ENCODE measurements at regions of chr1 and their contacts with region 1.

Region 1: DNA sequence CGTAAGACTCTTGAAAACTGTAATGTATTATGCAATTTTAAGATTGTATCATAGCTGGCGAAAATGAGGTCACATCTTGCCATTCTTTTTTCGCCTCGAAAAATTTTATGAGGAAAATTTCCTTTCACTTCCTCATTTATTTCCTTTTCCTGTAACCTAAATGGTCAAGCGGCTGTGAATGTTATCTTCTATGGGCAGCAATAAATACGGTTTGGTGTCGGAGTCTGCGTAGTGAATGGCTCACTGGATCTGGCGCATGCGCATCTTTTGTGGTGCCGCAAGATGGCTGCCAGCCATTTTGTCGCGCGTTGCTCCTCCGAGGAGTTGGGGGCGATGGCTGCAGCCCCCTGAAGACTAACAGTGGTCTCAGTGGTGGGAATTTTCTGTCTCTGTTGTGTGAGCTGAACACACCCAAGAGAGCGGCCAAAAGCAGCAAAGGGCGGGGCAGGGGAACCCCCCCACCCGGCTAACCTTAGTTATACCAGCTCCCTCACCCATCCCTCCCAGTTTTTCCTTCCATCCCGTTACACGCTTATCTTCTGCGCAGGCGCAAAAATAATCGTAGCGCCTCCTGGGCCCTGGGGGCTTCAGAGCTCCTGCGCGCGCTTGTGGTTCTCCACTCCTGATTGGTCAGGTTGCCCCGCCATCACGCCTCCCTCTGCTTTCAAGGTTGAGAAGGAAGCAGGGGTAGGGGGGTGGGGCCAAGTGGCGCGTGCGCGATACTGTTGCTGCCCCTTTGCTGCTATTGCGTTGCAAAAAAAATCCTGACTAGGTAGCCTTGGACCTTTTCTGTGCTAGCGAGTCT is at the start of gene RPRD2:
- DNase-seq: peak; percentile 100
- H3K4me3 Mint-ChIP-seq: peak within 1 kb of the TSS; percentile 92
- H3K27ac Mint-ChIP-seq: peak within 1 kb of the TSS; percentile 97
- H3K4me1 Mint-ChIP-seq: peaks cover 19% of the 10 kb centered on the region
- H3K27me3 Mint-ChIP-seq: no peaks in the 10 kb centered on the region
- CTCF ChIP-seq: no peak
- total RNA-seq, gene RPRD2: 35.2 and 37.4 TPM in 2 replicates

Region 2: DNA sequence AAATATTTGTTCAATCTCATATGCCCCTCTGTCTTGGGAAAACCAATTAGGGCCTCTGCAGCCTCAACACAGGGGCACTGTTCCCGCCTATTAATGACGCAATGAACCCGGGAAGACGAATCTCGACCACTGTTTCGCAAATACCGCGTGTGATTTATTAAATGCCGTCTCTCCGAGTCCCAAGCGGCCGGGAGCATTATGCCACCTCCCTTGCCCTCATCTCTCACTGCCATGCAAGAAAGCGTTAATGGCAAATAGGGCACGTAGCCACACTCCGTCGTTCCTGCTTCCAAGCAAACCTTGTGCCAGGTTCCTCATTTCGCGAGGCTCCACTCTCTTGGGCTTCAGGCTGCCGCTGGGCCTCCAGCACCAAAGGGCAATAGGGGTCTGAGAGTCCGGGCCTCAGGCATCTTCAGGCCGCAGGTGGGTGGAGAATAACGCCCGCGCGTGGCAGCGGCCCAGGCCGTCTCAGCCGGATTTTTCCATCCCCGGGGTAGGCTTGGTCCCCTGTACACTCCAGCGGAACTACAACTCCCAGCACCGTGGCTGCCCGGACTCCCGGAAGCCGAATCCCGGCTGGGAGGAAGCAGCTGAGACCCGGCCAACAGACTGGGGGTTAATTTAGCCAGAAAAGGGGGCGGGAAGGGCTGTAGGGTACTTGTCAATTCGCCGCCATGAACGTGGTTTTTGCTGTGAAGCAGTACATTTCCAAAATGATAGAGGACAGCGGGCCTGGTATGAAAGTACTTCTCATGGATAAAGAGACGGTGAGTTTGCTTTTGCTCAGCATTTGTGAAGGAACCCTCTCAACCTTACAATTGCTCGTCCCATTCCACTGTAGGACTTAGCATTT is 296.2 kb before region 1 on chr1 and contains the start of gene VPS45:
- CTCF ChIA-PET with region 1: no interaction called
- POLR2A ChIA-PET with region 1: interaction called, 11 read pairs
- intact Hi-C with region 1: no loop called
- DNase-seq: peak; percentile 95
- H3K4me3 Mint-ChIP-seq: peak within 1 kb of the TSS; percentile 91
- H3K27ac Mint-ChIP-seq: peak within 1 kb of the TSS; percentile 87
- H3K4me1 Mint-ChIP-seq: peaks cover 33% of the 10 kb centered on the region
- H3K27me3 Mint-ChIP-seq: no peaks in the 10 kb centered on the region
- CTCF ChIP-seq: no peak
- total RNA-seq, gene VPS45: 35.1 and 55.1 TPM in 2 replicates

Region 3: GRCh38 chr1:150268705-150269403 is 94.8 kb before region 1 on chr1 and contains the start of gene APH1A:
- CTCF ChIA-PET with region 1: no interaction called
- POLR2A ChIA-PET with region 1: interaction called, 15 read pairs
- intact Hi-C with region 1: no loop called
- DNase-seq: peak; percentile 99
- H3K4me3 Mint-ChIP-seq: peak within 1 kb of the TSS; percentile 81
- H3K27ac Mint-ChIP-seq: peak within 1 kb of the TSS; percentile 83
- H3K4me1 Mint-ChIP-seq: peaks cover 32% of the 10 kb centered on the region
- H3K27me3 Mint-ChIP-seq: no peaks in the 10 kb centered on the region
- CTCF ChIP-seq: no peak
- total RNA-seq, gene APH1A: 123 and 154 TPM in 2 replicates

Region 4: DNA sequence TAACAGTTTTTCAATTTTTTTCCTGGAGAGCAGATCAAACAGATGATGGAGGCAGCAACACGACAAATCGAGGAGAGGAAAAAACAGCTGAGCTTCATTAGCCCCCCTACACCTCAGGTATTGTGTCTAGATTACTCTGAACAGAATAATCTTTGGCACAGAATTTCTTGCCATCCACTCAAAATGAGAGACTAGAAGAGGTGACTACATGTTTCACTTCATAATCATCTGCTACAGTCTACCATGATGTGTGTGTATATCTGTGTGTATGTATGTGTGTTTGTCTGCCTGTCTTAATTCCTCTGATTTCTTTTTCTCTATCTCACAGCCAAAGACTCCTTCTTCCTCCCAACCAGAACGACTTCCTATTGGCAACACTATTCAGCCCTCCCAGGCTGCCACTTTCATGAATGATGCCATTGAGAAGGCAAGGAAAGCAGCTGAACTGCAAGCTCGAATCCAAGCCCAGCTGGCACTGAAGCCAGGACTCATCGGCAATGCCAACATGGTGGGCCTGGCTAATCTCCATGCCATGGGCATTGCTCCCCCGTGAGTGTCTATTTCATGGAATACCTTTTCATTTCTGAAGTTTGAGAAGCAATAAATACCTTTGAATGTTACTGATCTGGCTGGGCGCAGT is 30.9 kb before region 1 on chr1:
- CTCF ChIA-PET with region 1: interaction called, 5 read pairs
- POLR2A ChIA-PET with region 1: interaction called, 12 read pairs
- intact Hi-C with region 1: no loop called
- DNase-seq: no peak
- H3K4me3 Mint-ChIP-seq: no peak overlapping the region
- H3K27ac Mint-ChIP-seq: no peak overlapping the region
- H3K4me1 Mint-ChIP-seq: no peaks in the 10 kb centered on the region
- H3K27me3 Mint-ChIP-seq: no peaks in the 10 kb centered on the region
- CTCF ChIP-seq: no peak

Region 5: DNA sequence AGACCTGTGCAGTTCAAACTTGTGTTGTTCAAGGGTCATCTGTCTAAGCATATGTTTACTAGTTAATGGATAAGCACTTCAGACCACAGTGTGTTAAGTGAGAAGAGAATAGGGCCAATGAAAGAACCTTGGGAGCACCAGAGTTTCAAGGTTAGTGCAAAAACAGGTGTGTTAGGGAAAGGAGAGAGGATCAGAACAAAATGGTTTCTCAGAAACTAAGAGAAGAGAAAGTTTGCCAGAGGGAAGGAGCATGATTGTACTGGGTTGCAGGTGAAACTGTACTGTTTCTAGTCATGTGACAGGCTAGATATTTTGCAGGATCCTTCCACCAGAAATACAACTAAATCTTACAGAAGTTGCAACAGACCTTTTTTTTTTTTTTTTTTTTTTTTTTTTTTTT is 23.6 kb after region 1 on chr1:
- CTCF ChIA-PET with region 1: interaction called, 3 read pairs
- POLR2A ChIA-PET with region 1: interaction called, 36 read pairs
- intact Hi-C with region 1: no loop called
- DNase-seq: no peak
- H3K4me3 Mint-ChIP-seq: no peak overlapping the region
- H3K27ac Mint-ChIP-seq: no peak overlapping the region
- H3K4me1 Mint-ChIP-seq: peaks cover 12% of the 10 kb centered on the region
- H3K27me3 Mint-ChIP-seq: no peaks in the 10 kb centered on the region
- CTCF ChIP-seq: no peak

Region 6: GRCh38 chr1:150515328-150516048 is 151.9 kb after region 1 on chr1 and contains the start of gene FALEC:
- CTCF ChIA-PET with region 1: no interaction called
- POLR2A ChIA-PET with region 1: interaction called, 11 read pairs
- intact Hi-C with region 1: no loop called
- DNase-seq: peak; percentile 98
- H3K4me3 Mint-ChIP-seq: peak within 1 kb of the TSS; percentile 69
- H3K27ac Mint-ChIP-seq: peak within 1 kb of the TSS; percentile 36
- H3K4me1 Mint-ChIP-seq: peaks cover 10% of the 10 kb centered on the region
- H3K27me3 Mint-ChIP-seq: no peaks in the 10 kb centered on the region
- CTCF ChIP-seq: no peak
- total RNA-seq, gene FALEC: not detected in 2 replicates

Region 7: DNA sequence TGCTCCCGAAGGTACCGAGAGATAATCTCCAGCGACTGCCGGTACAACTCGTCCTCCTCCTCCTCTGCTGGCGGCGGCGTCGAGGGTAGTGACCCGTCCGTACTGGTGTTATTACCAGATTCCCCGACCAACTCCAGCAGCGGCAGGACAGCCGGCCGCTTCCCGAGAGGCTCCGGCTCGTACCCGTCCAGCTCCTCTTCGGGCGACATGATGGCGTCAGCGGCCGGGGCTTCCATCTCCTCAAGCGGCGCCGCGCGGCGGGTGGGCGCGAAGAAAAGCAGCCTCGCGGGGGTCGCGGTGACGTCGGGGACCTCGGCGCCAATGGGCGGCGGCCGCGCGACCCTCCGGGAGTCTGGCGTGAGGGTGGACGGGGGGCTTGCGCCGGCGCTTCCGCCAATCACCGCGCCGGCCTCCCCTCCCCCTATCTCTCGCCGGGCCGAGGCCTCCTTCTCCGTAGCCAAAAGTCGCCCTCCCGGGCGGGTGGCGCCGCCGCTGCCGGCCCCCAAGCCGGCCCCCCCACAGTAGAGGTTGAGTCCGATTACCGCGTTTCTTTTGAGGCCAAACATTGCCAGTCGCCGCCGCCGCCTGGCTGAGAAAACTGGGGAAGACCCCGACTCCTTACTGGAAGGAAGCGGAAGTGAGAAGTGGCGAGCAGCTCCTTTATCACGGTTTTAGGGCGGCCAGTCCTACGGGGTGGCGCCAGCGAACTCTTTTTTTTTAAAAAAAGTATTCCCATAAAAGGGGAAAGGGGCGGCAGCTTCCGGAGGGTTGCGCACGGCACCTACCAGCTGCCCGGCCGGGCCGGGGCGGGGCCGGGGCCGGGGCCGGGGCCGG is 215.6 kb after region 1 on chr1 and contains the start of gene MCL1:
- CTCF ChIA-PET with region 1: no interaction called
- POLR2A ChIA-PET with region 1: interaction called, 29 read pairs
- intact Hi-C with region 1: no loop called
- DNase-seq: peak; percentile 98
- H3K4me3 Mint-ChIP-seq: peak within 1 kb of the TSS; percentile 99
- H3K27ac Mint-ChIP-seq: peak within 1 kb of the TSS; percentile 99
- H3K4me1 Mint-ChIP-seq: peaks cover 35% of the 10 kb centered on the region
- H3K27me3 Mint-ChIP-seq: no peaks in the 10 kb centered on the region
- CTCF ChIP-seq: no peak
- total RNA-seq, gene MCL1: 497 and 624 TPM in 2 replicates